PC-3 (cell line): ENCODE measurements at regions of chr21 and their contacts with region 1.

Region 1: DNA sequence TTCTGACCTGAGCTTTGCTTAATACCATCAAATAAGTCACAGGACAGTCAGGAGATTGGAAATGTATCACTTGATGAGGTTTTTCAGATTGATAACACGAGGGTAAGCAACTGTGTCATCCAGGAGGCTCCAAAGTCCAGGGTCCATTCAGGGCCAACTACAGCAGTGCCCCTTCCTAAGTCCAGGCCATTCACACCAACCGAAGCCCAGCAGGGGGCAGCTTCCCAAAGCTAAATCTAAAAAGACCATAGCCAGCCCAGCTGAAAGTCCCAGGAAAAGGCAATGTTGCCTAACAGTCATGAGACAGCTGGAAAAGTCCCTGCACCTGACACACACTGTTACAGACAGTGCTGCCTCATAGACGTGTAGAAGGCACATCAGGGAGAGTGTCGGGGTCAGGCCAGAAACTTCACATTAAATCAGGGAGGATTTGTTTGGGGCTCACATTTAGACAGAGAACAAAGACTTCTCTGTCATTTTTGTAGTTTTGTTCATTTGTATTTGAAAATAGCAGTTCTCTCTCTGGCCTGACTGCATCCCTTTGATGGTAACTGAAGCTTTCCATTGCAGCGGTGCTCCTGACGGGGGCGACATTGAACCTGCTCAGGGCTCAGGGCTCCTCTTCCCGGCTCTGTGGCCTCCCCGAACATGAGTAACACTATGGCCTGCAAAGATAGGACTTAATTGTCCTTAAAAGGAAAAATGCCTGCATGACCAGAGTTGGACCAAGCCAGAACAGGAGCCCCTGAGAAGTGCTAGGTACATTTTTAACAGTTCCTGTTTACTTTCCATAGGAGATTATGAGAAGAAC is 200.4 kb downstream of the NRIP1 start:
- DNase-seq: peak; percentile 80
- ATAC-seq: peak; percentile 75
- H3K4me3 ChIP-seq: no peak overlapping the region
- H3K27ac ChIP-seq: peak overlapping the region; percentile 41
- H3K4me1 ChIP-seq: peaks cover 28% of the 10 kb centered on the region
- H3K27me3 ChIP-seq: no peaks in the 10 kb centered on the region
- CTCF ChIP-seq: peak; percentile 82

Region 2: DNA sequence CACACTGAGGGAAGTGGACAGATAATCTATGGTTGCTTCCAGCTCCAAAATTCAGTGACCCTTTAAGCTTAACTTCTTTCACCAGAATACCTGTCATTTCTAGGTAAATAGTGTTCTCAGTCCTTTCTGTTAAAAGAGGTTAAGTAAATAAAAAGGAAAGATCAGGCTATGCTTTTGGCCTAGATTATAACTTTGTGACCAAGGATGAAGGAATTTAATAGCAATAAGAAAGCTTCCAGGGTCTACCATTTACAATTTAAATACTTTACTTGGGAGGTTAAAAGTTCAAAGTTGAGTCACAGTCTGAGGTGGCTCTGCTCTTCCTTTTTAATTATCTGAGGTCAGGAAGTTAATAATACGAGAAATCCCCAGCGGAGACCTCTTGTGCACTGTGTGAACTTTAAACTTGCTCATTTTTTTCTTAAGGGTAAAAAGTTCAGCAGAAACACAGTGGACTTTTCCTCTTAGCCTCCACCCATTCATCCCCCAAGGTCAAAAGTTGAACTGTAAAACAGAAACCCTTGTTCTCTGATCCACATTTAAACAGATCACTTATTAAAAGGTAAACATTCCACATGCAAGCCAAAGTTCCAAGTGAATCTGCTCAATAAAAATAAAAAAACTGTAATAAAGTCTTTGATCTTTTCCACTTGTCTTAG is 13.3 kb after region 1 on chr21:
- CTCF ChIA-PET with region 1: interaction called, 4 read pairs
- POLR2A ChIA-PET with region 1: no interaction called
- intact Hi-C with region 1: loop called (anchors 2 kb)
- DNase-seq: peak; percentile 97
- ATAC-seq: peak; percentile 62
- H3K4me3 ChIP-seq: peak overlapping the region; percentile 35
- H3K27ac ChIP-seq: peak overlapping the region; percentile 94
- H3K4me1 ChIP-seq: peaks cover 88% of the 10 kb centered on the region
- H3K27me3 ChIP-seq: no peaks in the 10 kb centered on the region
- CTCF ChIP-seq: no peak

Region 3: DNA sequence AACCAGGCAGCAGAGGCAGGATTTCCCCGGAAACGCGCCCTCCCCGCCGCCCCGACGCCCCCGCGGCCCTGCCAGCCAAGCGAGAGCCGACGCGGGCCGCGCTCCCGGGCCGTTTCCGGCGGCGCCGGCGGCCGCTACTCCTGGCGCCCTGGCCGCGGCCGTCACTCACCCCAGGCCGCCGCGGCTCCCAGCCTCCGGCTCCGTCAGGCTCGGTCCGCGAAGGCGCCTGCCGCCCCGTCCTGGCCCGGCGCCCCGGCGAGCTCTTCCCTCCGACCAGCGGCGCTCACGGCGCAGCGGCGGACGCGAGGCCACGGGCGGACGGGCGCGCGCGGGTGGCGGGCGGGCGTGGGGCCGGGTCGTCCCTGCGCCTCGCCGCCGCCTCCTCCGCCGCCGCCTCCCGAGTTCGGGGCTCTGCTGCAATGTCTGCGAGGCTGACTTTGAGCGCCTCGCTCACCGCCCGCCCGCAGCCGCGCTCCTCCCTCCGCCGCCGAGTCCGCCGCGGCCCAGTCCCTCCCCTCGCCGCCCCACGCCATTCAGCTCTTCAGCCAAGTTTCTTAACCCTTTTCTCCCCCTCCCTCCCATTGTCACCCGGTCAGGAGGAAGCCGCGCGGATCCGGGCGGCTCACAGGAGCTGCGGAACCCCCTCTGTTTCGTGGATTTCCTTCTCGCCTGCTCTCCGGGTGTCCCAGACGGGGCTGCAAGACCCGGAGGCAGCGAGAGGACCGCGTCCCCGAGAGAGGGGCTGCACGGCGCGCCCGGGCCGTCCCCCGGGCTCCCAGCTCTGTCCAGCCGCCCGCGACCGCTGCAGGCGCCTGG is 200.4 kb after region 1 on chr21 and contains the start of gene NRIP1:
- CTCF ChIA-PET with region 1: no interaction called
- POLR2A ChIA-PET with region 1: no interaction called
- intact Hi-C with region 1: loop called (anchors 1 kb)
- DNase-seq: peak; percentile 89
- ATAC-seq: peak; percentile 64
- H3K4me3 ChIP-seq: peak within 1 kb of the TSS; percentile 85
- H3K27ac ChIP-seq: peak within 1 kb of the TSS; percentile 72
- H3K4me1 ChIP-seq: peaks cover 27% of the 10 kb centered on the region
- H3K27me3 ChIP-seq: no peaks in the 10 kb centered on the region
- CTCF ChIP-seq: no peak
- total RNA-seq, gene NRIP1: 68.0 and 69.2 TPM in 2 replicates

Region 4: GRCh38 chr21:15164678-15165303 is 300.4 kb after region 1 on chr21:
- CTCF ChIA-PET with region 1: no interaction called
- POLR2A ChIA-PET with region 1: no interaction called
- intact Hi-C with region 1: no loop called
- DNase-seq: peak; percentile 29
- ATAC-seq: no peak
- H3K4me3 ChIP-seq: no peak overlapping the region
- H3K27ac ChIP-seq: no peak overlapping the region
- H3K4me1 ChIP-seq: peaks cover 4% of the 10 kb centered on the region
- H3K27me3 ChIP-seq: no peaks in the 10 kb centered on the region
- CTCF ChIP-seq: no peak

Region 5: GRCh38 chr21:15483138-15483780 is 618.8 kb after region 1 on chr21:
- CTCF ChIA-PET with region 1: no interaction called
- POLR2A ChIA-PET with region 1: no interaction called
- intact Hi-C with region 1: loop called (anchors 1 kb)
- DNase-seq: peak; percentile 95
- ATAC-seq: peak; percentile 100
- H3K4me3 ChIP-seq: no peak overlapping the region
- H3K27ac ChIP-seq: no peak overlapping the region
- H3K4me1 ChIP-seq: peaks cover 16% of the 10 kb centered on the region
- H3K27me3 ChIP-seq: no peaks in the 10 kb centered on the region
- CTCF ChIP-seq: peak; percentile 96